Ascending aorta (tissue), 2 donors: ENCODE measurements at regions of chr5 and their contacts with region 1.

Region 1: GRCh38 chr5:13133951-13134350 is 810.5 kb downstream of the DNAH5 start:
- DNase-seq: no peak
- H3K4me3 ChIP-seq: no peak overlapping the region
- H3K27ac ChIP-seq: no peak overlapping the region
- H3K4me1 ChIP-seq: no peaks in the 10 kb centered on the region
- H3K27me3 ChIP-seq: no peaks in the 10 kb centered on the region
- CTCF ChIP-seq: no peak

Region 2: GRCh38 chr5:13063088-13063487 is 70.9 kb before region 1 on chr5:
- intact Hi-C with region 1: loop called (anchors 2 kb)
- DNase-seq: no peak
- H3K4me3 ChIP-seq: no peak overlapping the region
- H3K27ac ChIP-seq: no peak overlapping the region
- H3K4me1 ChIP-seq: no peaks in the 10 kb centered on the region
- H3K27me3 ChIP-seq: no peaks in the 10 kb centered on the region
- CTCF ChIP-seq: no peak

Region 3: DNA sequence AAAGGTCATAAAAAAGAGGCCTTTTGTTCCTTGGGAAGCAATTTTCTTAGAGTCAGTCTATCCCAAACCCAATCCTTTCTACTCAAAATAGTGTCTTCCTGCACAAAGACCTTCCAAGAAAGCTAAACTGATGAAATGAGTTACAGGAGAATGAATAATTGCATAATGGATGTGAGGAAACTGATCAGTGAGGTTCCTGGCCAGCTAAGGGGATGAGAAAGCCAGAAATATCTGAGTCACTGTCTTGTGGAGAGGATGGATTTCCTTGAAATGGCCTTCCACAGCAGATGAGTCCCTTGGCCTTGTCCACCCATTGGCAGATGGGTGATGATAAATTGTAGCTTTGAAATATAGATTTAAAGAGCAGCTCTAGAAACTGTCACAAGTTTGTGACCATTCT is 54.4 kb after region 1 on chr5:
- intact Hi-C with region 1: no loop called
- DNase-seq: no peak
- H3K4me3 ChIP-seq: no peak overlapping the region
- H3K27ac ChIP-seq: no peak overlapping the region
- H3K4me1 ChIP-seq: no peaks in the 10 kb centered on the region
- H3K27me3 ChIP-seq: no peaks in the 10 kb centered on the region
- CTCF ChIP-seq: no peak